ENCODE measurements at regions of chr17 and their contacts with region 1.

Region 1: GRCh38 chr17:4908301-4908700 is 5.4 kb upstream of the CHRNE start:
- DNase-seq: peak; percentile 43
- H3K4me3 Mint-ChIP-seq: no peak overlapping the region
- H3K27ac Mint-ChIP-seq: no peak overlapping the region
- H3K4me1 Mint-ChIP-seq: peaks cover 5% of the 10 kb centered on the region
- H3K27me3 Mint-ChIP-seq: no peaks in the 10 kb centered on the region
- CTCF ChIP-seq: no peak

Region 2: GRCh38 chr17:4852567-4853207 is 55.6 kb before region 1 on chr17:
- CTCF ChIA-PET with region 1: no interaction called
- POLR2A ChIA-PET with region 1: interaction called, 10 read pairs
- intact Hi-C with region 1: no loop called
- DNase-seq: peak; percentile 63
- H3K4me3 Mint-ChIP-seq: peak overlapping the region; percentile 2
- H3K27ac Mint-ChIP-seq: peak overlapping the region; percentile 89
- H3K4me1 Mint-ChIP-seq: peaks cover 75% of the 10 kb centered on the region
- H3K27me3 Mint-ChIP-seq: no peaks in the 10 kb centered on the region
- CTCF ChIP-seq: no peak

Region 3: GRCh38 chr17:4934173-4934979 is 26.1 kb after region 1 on chr17:
- CTCF ChIA-PET with region 1: interaction called, 24 read pairs
- POLR2A ChIA-PET with region 1: interaction called, 182 read pairs
- intact Hi-C with region 1: loop called (anchors 1 kb)
- DNase-seq: peak; percentile 42
- H3K4me3 Mint-ChIP-seq: peak overlapping the region; percentile 19
- H3K27ac Mint-ChIP-seq: no peak overlapping the region
- H3K4me1 Mint-ChIP-seq: peaks cover 16% of the 10 kb centered on the region
- H3K27me3 Mint-ChIP-seq: no peaks in the 10 kb centered on the region
- CTCF ChIP-seq: peak; percentile 31

Region 4: DNA sequence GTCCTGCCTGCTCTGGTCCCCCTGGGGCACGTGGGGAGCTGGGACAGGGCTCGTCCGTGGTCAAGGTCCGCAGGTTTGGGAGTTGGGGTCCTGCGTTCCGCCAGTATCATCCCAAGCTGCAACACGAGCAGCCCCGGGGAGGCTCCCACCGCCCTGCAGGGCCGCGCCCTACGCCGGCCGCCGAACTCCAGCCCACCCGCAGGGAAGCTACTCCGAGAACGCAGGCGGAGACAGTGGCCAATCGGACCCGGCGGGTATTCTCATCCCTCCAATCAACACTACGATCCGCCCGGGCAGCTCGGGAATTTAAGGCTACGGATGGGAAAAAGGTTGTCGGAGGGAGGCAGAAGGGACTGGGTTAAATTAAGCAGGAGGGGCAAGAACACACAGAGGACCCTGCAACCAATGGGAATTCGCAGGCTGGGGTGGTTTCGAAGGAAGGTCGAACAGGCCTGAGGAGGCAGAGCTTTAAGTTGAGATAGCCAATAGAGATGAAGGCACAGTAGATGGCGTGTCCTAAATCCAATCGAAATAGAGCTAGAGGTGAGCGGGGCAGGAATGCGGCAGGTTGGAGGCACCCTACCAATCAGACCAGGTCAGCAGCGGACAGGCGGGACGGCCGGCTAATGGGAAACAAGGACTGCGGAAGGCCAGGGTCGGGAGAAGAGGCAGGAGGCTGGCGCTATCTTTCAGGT is 58.7 kb after region 1 on chr17:
- CTCF ChIA-PET with region 1: interaction called, 12 read pairs
- POLR2A ChIA-PET with region 1: interaction called, 73 read pairs
- intact Hi-C with region 1: loop called (anchors 1 kb)
- DNase-seq: peak; percentile 99
- H3K4me3 Mint-ChIP-seq: no peak overlapping the region
- H3K27ac Mint-ChIP-seq: no peak overlapping the region
- H3K4me1 Mint-ChIP-seq: peaks cover 15% of the 10 kb centered on the region
- H3K27me3 Mint-ChIP-seq: no peaks in the 10 kb centered on the region
- CTCF ChIP-seq: no peak

Region 5: GRCh38 chr17:4997302-4998026 is 89.2 kb after region 1 on chr17 and contains the starts of genes INCA1 and KIF1C:
- CTCF ChIA-PET with region 1: interaction called, 5 read pairs
- POLR2A ChIA-PET with region 1: interaction called, 12 read pairs
- intact Hi-C with region 1: no loop called
- DNase-seq: peak; percentile 90
- H3K4me3 Mint-ChIP-seq: peak within 1 kb of the TSS; percentile 97
- H3K27ac Mint-ChIP-seq: peak within 1 kb of the TSS; percentile 86
- H3K4me1 Mint-ChIP-seq: peaks cover 23% of the 10 kb centered on the region
- H3K27me3 Mint-ChIP-seq: no peaks in the 10 kb centered on the region
- CTCF ChIP-seq: no peak
- total RNA-seq, gene INCA1: 0.44 and 0.49 TPM in 2 replicates
- total RNA-seq, gene KIF1C: 84.8 and 100 TPM in 2 replicates

Region 6: DNA sequence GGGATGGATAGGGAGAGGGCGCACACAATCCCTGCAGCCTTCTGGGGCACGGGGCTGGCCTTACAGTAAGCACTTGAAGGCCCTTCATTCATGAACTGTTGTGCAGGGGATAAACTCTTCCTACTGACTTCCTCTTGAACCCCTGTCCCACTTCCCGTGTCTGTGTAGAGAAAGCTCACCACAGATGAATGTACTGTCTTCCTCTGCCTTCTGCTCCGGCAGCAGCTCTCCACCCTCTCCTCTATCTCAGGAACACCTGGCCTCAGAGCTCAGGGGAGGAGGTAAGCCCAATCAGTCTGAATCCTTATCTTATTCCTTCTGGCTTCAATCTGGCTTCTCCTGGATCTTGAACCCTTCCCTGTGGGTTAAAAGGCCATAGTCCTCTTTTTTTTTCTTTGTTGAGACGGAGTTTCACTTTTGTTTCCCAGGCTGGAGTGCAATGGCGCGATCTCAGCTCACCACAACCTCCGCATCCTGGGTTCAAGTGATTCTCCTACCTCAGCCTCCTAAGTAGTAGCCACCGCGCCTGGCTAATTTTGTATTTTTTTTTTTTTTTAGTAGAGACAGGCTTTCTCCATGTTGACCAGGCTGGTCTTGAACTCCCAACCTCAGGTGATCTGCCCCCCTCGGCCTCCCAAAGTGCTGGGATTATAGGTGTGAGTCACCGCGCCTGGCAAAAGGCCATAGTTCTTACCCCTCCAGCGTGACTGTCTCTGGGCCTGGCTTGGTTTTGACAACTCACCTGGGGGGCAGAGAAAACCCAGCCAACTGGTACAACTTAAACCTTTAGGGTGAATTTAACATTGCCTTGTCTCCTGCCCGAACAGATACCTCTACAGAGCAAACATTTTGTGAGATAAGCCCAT is 134.1 kb after region 1 on chr17:
- CTCF ChIA-PET with region 1: no interaction called
- POLR2A ChIA-PET with region 1: no interaction called
- intact Hi-C with region 1: no loop called
- DNase-seq: peak; percentile 41
- H3K4me3 Mint-ChIP-seq: no peak overlapping the region
- H3K27ac Mint-ChIP-seq: no peak overlapping the region
- H3K4me1 Mint-ChIP-seq: no peaks in the 10 kb centered on the region
- H3K27me3 Mint-ChIP-seq: no peaks in the 10 kb centered on the region
- CTCF ChIP-seq: no peak